Adrenal gland (tissue), 19 donors: ENCODE measurements at regions of chr17 and their contacts with region 1.

Region 1: GRCh38 chr17:43760254-43760852 is 1.8 kb upstream of the SOST start:
- DNase-seq: peak; percentile 92 to 98 (median 96)
- H3K4me3 ChIP-seq: no peak overlapping the region
- H3K27ac ChIP-seq: no peak overlapping the region
- H3K4me1 ChIP-seq: peaks cover 1 to 3% of the 10 kb centered on the region in 2 donors
- H3K27me3 ChIP-seq: no peaks in the 10 kb centered on the region
- CTCF ChIP-seq: peak; percentile 95 to 100 (median 100)
- POLR2A ChIP-seq: no peak

Region 2: DNA sequence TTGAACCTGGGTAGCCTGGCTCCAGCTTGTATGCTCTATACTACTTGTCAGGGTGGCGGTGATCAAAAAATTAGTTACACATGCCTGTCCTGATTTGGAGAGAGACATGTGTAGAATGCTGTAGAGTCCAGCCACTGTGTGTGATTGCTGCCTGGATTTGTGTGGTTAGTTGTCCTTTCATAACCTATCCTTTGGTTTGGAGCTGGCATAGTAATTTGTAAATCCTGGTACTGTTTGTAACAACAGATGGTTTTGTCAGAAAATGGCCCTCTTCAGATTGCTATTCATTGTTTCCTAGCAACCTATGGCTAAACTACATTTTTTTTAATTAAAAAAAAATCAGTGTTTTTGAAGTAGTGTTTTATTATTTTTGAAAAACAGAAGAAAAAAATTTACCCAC is 244.7 kb before region 1 on chr17:
- intact Hi-C with region 1: no loop called
- DNase-seq: peak in 1 of 7 donors; percentile 37
- H3K4me3 ChIP-seq: no peak overlapping the region
- H3K27ac ChIP-seq: no peak overlapping the region
- H3K4me1 ChIP-seq: no peaks in the 10 kb centered on the region
- H3K27me3 ChIP-seq: no peaks in the 10 kb centered on the region
- CTCF ChIP-seq: no peak
- POLR2A ChIP-seq: no peak

Region 3: GRCh38 chr17:43570518-43570928 is 189.8 kb before region 1 on chr17:
- intact Hi-C with region 1: loop called in 1 of 2 experiments (anchors 5 kb)
- DNase-seq: no peak
- H3K4me3 ChIP-seq: no peak overlapping the region
- H3K27ac ChIP-seq: no peak overlapping the region
- H3K4me1 ChIP-seq: no peaks in the 10 kb centered on the region
- H3K27me3 ChIP-seq: no peaks in the 10 kb centered on the region
- CTCF ChIP-seq: no peak
- POLR2A ChIP-seq: no peak

Region 4: GRCh38 chr17:43694077-43694870 is 66.1 kb before region 1 on chr17:
- intact Hi-C with region 1: loop called (anchors 2 to 5 kb)
- DNase-seq: peak; percentile 78 to 90 (median 83)
- H3K4me3 ChIP-seq: no peak overlapping the region
- H3K27ac ChIP-seq: no peak overlapping the region
- H3K4me1 ChIP-seq: peaks cover 7 to 13% of the 10 kb centered on the region in 2 donors
- H3K27me3 ChIP-seq: no peaks in the 10 kb centered on the region
- CTCF ChIP-seq: peak; percentile 83 to 99 (median 98)
- POLR2A ChIP-seq: no peak

Region 5: GRCh38 chr17:43814714-43815113 is 54.4 kb after region 1 on chr17:
- intact Hi-C with region 1: no loop called
- DNase-seq: no peak
- H3K4me3 ChIP-seq: no peak overlapping the region
- H3K27ac ChIP-seq: no peak overlapping the region
- H3K4me1 ChIP-seq: no peaks in the 10 kb centered on the region
- H3K27me3 ChIP-seq: no peaks in the 10 kb centered on the region
- CTCF ChIP-seq: no peak
- POLR2A ChIP-seq: no peak

Region 6: DNA sequence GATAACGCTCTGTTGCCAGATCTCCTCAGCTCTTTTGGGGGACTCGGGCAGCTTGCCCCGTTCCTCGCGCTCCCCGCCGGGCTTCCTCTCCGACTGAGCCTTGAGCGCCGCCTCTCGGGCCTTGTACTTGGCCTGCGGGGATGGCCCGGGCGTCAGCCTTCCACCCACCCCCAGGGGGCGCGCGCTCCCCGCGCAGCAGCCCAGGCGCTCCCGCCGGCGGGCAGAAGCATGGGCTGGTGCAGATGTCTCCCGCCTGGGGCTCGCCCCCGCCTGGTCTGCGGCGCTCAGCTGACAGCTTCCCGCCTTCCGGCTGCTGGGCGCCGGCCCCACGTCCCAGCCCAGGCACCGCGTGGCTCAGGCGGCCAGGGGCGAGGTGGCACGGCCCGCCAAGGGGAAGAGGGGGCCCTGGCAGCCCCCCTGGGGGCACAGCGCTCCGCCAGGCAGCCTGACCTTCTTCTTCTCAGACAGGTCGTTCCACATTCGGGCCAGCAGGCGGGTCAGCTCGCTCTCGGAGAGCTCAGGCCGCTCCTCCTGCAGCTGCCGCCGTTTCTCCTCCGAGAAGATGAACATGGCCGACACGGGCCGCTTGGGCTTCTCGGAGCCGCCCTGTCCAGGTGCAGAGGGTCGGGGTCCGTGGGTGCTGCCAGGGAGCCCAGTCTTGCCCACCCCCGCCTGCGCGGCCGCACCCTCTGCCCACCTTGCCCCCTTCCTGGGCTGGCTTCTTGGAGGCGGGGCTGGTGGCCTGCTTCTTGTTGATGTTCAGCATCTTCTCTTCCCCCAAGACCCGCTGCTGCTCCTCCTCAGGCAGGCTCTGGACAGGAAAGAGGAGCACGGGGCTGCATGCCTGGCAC is 450.2 kb after region 1 on chr17:
- intact Hi-C with region 1: no loop called
- DNase-seq: peak; percentile 88 to 94 (median 92)
- H3K4me3 ChIP-seq: no peak overlapping the region
- H3K27ac ChIP-seq: peak overlapping the region in 4 of 5 donors; percentile 5 to 79 (median 40)
- H3K4me1 ChIP-seq: peaks cover 16 to 32% of the 10 kb centered on the region in 2 donors
- H3K27me3 ChIP-seq: no peaks in the 10 kb centered on the region
- CTCF ChIP-seq: peak; percentile 93 to 100 (median 97)
- POLR2A ChIP-seq: peak in 1 of 2 donors; percentile 49